OCI-LY7 (cell line): ENCODE measurements at regions of chr10 and their contacts with region 1.

Region 1: DNA sequence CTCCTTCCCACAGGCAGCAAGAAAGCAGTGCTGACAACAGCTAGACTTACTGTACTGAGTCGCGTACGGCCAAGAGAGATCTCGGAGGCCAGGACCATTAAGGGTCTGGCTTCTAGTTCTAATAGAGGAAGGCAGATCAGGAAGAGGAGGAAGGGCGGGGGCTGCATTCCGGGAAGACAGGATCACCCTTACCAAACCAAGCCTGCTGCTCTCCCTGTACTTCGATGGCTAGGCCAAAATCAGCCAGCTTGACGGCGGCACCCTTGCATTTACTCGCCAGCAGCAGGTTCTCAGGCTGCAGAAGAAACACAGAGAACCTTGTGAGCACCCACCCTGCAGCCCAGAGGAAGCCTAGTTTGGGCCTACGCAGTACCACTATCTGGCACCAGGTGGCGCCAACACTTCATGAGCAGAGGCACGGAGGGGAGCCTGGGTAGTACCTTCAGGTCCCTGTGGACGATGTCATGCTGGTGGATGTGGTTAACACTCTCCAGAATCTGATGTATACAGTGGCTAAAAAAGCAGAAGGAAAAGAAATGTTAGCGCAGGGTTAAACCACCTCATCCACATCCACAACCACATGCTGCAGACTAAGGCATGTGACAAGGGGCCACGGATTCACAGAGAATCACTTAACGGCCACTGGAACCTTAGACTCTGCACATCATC is 25.4 kb downstream of the CAMK2G start:
- DNase-seq: peak; percentile 90
- H3K4me3 ChIP-seq: no peak overlapping the region
- H3K27ac ChIP-seq: no peak overlapping the region
- H3K4me1 ChIP-seq: peaks cover 7% of the 10 kb centered on the region
- CTCF ChIP-seq: peak; percentile 99

Region 2: GRCh38 chr10:73874267-73875138 is 25.5 kb after region 1 on chr10 and contains the start of gene CAMK2G:
- CTCF ChIA-PET with region 1: interaction called, 25 read pairs
- POLR2A ChIA-PET with region 1: interaction called, 13 read pairs
- intact Hi-C with region 1: loop called (anchors 1 kb)
- DNase-seq: peak; percentile 89
- H3K4me3 ChIP-seq: peak within 1 kb of the TSS; percentile 81
- H3K27ac ChIP-seq: no peak within 1 kb of the TSS
- H3K4me1 ChIP-seq: peaks cover 24% of the 10 kb centered on the region
- CTCF ChIP-seq: no peak
- total RNA-seq, gene CAMK2G: 21.1 and 29.1 TPM in 2 replicates

Region 3: DNA sequence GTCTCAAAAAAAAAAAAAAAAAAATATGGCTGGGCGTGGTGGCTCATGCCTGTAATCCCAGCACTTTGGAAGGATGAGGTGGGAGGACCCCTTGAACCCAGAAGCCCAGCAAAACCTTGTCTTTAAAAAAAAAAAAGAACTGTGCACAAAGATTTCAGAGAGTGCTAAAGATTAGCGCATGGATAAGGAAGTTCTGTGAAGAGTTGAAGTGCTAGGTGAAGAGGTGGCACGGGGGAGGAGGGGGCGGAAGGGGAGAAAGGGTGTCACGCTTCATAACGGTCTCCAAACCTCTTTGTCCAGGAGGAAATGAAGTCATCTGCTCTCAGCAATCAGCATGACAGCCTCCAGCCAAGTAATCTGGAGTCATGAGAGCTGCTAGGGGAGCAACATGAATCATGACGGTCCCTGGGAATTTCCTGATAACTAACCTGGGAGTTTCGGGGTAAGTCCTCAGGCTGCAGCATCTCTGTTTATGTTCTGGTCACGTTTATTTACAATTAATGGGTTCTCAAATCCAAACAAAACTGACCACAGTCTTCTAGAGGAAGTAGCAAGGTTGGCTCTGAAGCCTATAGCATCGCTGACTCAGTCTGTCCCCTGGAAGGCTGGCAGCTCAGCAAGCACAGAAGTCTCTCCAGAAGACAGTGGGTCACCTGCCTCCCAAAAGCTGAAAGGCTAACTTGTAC is 60.0 kb after region 1 on chr10:
- CTCF ChIA-PET with region 1: no interaction called
- POLR2A ChIA-PET with region 1: no interaction called
- intact Hi-C with region 1: no loop called
- DNase-seq: peak; percentile 70
- H3K4me3 ChIP-seq: peak overlapping the region; percentile 68
- H3K27ac ChIP-seq: peak overlapping the region; percentile 61
- H3K4me1 ChIP-seq: peaks cover 39% of the 10 kb centered on the region
- CTCF ChIP-seq: no peak

Region 4: DNA sequence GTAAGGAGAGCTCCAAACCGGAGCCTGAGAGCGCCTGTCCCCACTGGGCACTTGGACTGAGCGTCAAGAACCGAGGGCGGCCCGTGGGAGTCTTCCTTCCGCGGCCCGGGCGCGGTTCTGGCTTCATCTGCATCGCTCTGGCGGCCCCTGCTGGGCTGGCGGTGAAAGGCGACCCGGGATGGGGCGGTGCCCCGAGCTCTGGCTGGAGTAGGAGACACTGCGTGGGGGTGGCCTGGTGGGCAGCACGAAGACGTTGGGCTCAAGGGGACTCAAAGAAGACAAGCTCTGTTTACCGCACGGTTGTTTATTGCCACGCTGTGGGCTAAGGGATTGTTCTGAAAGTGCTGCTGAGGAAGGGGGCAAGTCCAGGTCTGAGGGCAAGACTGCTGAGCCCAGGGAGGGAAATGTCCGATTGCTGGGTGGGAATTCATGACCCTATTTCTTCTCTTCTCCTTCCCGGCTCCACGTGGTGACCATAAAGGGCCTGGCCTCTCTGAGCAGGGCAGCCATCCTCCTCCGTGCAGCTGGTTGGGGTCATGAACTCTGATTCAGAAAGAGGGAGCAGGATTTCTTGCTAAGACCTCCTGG is 91.8 kb after region 1 on chr10:
- CTCF ChIA-PET with region 1: interaction called, 3 read pairs
- POLR2A ChIA-PET with region 1: no interaction called
- intact Hi-C with region 1: loop called (anchors 1 kb)
- DNase-seq: peak; percentile 62
- H3K4me3 ChIP-seq: no peak overlapping the region
- H3K27ac ChIP-seq: no peak overlapping the region
- H3K4me1 ChIP-seq: no peaks in the 10 kb centered on the region
- CTCF ChIP-seq: peak; percentile 91

Region 5: GRCh38 chr10:74021248-74022055 is 172.5 kb after region 1 on chr10:
- CTCF ChIA-PET with region 1: no interaction called
- POLR2A ChIA-PET with region 1: no interaction called
- intact Hi-C with region 1: no loop called
- DNase-seq: no peak
- H3K4me3 ChIP-seq: no peak overlapping the region
- H3K27ac ChIP-seq: no peak overlapping the region
- H3K4me1 ChIP-seq: no peaks in the 10 kb centered on the region
- CTCF ChIP-seq: no peak

Region 6: GRCh38 chr10:74118804-74119203 is 269.8 kb after region 1 on chr10:
- CTCF ChIA-PET with region 1: no interaction called
- POLR2A ChIA-PET with region 1: no interaction called
- intact Hi-C with region 1: no loop called
- DNase-seq: no peak
- H3K4me3 ChIP-seq: no peak overlapping the region
- H3K27ac ChIP-seq: no peak overlapping the region
- H3K4me1 ChIP-seq: no peaks in the 10 kb centered on the region
- CTCF ChIP-seq: no peak

Region 7: GRCh38 chr10:74189999-74190421 is 341.1 kb after region 1 on chr10:
- CTCF ChIA-PET with region 1: no interaction called
- POLR2A ChIA-PET with region 1: no interaction called
- intact Hi-C with region 1: no loop called
- DNase-seq: peak; percentile 78
- H3K4me3 ChIP-seq: peak overlapping the region; percentile 50
- H3K27ac ChIP-seq: peak overlapping the region; percentile 48
- H3K4me1 ChIP-seq: peaks cover 23% of the 10 kb centered on the region
- CTCF ChIP-seq: no peak